ENCODE measurements at regions of chr7 and their contacts with region 1.

Region 1: GRCh38 chr7:123879628-123880027 is 34.7 kb downstream of the HYAL4 start:
- DNase-seq: no peak
- H3K4me3 Mint-ChIP-seq: no peak overlapping the region
- H3K27ac Mint-ChIP-seq: no peak overlapping the region
- H3K4me1 Mint-ChIP-seq: no peaks in the 10 kb centered on the region
- H3K27me3 Mint-ChIP-seq: peaks cover 11% of the 10 kb centered on the region

Region 2: DNA sequence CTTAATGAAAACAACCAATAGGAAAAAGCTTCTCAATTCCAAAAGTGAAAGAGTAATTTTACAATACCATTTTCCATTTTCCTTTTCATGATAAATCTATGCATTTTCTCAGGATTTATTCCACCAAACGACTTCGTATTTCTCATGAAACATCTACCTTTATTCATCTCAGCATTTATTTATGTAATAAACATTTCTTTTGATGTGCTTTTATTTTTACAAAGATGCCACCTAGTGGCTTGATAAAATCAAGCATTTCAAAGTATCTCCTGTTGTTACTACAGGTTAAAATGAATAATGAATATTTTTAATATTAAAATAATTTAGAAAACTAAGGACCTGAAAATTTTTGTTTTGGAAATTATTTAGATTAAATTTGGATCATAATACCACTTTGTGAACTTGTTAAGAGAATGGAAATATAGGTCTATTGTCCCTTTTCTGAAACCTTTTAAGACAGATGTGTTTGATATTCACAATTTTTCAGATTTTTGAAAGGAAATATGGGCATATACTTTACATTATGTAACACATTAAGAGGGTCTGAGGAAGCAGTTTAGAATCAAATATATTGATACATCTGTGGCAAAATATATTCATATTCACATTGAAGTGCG is 342.5 kb before region 1 on chr7:
- intact Hi-C with region 1: no loop called
- DNase-seq: no peak
- H3K4me3 Mint-ChIP-seq: no peak overlapping the region
- H3K27ac Mint-ChIP-seq: no peak overlapping the region
- H3K4me1 Mint-ChIP-seq: peaks cover 24% of the 10 kb centered on the region
- H3K27me3 Mint-ChIP-seq: peaks cover 22% of the 10 kb centered on the region

Region 3: DNA sequence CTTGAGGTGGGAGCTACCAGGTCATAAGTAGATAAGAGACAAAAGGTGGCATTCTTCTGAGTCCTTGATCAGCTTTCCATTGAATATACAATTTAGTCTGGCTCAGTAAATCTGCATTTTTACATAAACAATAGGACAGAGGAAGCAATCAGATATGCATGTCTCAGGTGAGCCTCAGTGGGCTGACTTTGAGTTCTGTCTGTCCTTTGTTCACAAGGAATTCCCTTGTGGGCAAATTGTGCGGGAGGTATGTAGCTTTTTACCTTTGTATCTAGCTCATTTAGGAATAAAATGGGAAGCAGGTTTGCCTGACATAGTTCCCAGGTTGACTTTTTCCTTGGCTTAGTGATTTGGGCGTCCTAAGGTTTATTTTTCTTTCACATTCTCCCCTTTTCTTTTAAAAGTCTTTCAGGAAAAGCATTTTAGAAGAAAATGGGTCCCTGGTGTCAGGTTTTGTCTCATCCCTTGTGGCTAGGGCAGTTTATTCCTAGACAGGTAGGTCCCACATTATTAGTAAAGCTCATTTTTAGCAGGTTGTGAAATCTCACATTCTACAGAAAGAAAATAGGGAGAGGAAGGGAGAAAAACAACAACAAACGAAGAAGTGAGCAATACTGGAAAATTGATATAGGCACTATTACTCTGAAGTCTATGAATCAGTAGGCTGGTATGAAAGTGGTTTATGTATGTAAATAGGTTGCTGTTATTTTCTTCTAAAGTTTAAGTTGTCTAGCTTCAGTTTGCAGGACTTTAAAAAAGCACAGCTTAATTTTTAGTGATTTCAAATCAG is 62.0 kb after region 1 on chr7:
- intact Hi-C with region 1: loop called (anchors 10 kb)
- DNase-seq: no peak
- H3K4me3 Mint-ChIP-seq: no peak overlapping the region
- H3K27ac Mint-ChIP-seq: no peak overlapping the region
- H3K4me1 Mint-ChIP-seq: no peaks in the 10 kb centered on the region
- H3K27me3 Mint-ChIP-seq: no peaks in the 10 kb centered on the region

Region 4: DNA sequence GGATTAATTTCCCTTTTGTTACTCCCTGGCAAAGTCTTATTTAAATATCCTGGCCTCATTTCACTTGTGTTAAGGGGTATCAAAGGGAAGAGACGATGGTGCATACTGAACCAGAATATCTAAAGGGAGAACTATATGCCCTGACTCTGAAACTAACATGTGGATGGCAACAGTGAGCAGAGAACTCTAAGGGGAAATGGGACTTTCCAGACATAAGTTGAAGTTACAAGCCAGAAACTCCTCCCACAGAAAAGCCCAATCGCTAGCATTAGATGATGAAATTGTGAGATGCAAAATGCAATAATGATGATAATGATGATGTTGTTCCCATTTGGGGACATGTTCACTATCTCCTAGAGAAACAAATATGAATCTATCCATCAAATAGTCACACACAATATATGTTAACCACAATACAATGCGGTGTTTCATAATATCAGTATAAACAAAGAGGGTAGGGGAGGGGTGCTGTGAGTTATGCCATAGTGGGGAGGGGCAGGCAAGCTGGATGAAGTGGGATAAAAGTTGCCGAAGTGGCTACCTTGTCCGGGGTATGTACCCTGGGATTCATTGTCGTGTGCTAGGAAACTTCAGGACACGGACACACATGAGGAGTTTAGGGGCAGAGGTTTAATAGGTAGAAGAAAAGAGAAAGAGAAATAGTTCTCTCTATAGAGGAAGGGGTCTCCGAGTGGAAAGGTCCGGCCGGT is 116.1 kb after region 1 on chr7:
- intact Hi-C with region 1: no loop called
- DNase-seq: no peak
- H3K4me3 Mint-ChIP-seq: no peak overlapping the region
- H3K27ac Mint-ChIP-seq: no peak overlapping the region
- H3K4me1 Mint-ChIP-seq: no peaks in the 10 kb centered on the region
- H3K27me3 Mint-ChIP-seq: no peaks in the 10 kb centered on the region